PC-9 (cell line): ENCODE measurements at regions of chr9 and their contacts with region 1.

Region 1: GRCh38 chr9:81529556-81530195 is 159.7 kb downstream of the TLE1 start:
- DNase-seq: peak; percentile 53 to 81
- H3K4me3 ChIP-seq: no peak overlapping the region
- H3K27ac ChIP-seq: peak overlapping the region; percentile 52
- H3K4me1 ChIP-seq: peaks cover 23% of the 10 kb centered on the region
- H3K27me3 ChIP-seq: no peaks in the 10 kb centered on the region
- CTCF ChIP-seq: no peak

Region 2: DNA sequence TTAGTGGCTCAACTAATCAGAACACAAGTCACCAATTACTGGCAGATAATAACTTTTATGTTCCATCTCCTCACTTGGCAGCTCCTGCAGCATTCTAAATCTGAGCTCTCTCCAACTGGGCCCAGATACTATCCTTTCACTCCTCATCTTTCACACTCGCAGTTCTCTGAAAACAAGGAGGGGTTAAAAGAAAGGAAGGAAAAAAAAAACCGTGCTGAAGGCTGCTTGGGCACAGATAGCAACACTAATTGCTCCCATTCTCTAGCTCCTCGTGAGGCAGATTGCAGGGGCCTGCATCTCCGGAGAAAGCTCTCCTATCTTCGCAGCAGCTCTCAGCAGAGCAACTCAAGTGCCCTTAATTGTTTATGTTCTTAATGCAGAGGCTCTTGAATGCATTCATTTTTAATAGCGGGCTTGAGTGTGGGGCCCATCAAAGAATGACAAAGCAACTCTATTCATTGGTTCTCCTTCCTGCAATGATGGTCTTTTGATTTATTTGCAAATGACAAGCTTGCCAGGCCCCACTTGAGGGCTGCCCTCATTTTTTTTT is 135.7 kb after region 1 on chr9:
- CTCF ChIA-PET with region 1: no interaction called
- POLR2A ChIA-PET with region 1: no interaction called
- intact Hi-C with region 1: no loop called
- DNase-seq: no peak
- H3K4me3 ChIP-seq: no peak overlapping the region
- H3K27ac ChIP-seq: no peak overlapping the region
- H3K4me1 ChIP-seq: no peaks in the 10 kb centered on the region
- H3K27me3 ChIP-seq: no peaks in the 10 kb centered on the region
- CTCF ChIP-seq: no peak

Region 3: DNA sequence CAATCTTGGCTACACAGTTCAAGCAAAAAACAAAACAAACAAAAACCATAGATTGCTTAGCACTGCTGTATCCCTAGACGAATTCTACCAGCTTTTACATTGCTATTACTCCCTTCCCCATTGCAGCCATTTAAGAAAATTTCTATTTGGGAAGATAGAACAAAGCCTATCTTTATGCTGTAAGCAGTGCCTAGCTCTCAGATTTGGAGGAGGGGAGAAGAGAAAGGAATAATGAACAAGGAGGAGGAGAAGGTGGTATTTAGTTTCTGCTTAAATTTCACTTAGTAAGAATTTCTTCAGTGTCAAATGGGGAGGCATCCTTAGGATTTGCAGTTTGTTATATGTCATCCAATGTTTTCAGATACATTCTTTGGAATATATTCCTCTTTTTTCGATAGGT is 175.9 kb after region 1 on chr9:
- CTCF ChIA-PET with region 1: no interaction called
- POLR2A ChIA-PET with region 1: no interaction called
- intact Hi-C with region 1: no loop called
- DNase-seq: no peak
- H3K4me3 ChIP-seq: no peak overlapping the region
- H3K27ac ChIP-seq: no peak overlapping the region
- H3K4me1 ChIP-seq: peaks cover 24% of the 10 kb centered on the region
- H3K27me3 ChIP-seq: no peaks in the 10 kb centered on the region
- CTCF ChIP-seq: no peak

Region 4: GRCh38 chr9:83372957-83373356 is 1843.3 kb after region 1 on chr9:
- CTCF ChIA-PET with region 1: no interaction called
- POLR2A ChIA-PET with region 1: interaction called, 14 read pairs
- intact Hi-C with region 1: no loop called
- DNase-seq: no peak
- H3K4me3 ChIP-seq: no peak overlapping the region
- H3K27ac ChIP-seq: no peak overlapping the region
- H3K4me1 ChIP-seq: no peaks in the 10 kb centered on the region
- H3K27me3 ChIP-seq: no peaks in the 10 kb centered on the region
- CTCF ChIP-seq: no peak